Activated CD4-positive, alpha-beta memory T cell treated with anti-CD3 and anti-CD28 coated beads for 36 hours (primary cell): ENCODE measurements at regions of chr3 and their contacts with region 1.

Region 1: GRCh38 chr3:39267631-39268548 is 11.9 kb downstream of the CX3CR1 start:
- DNase-seq: peak; percentile 86
- H3K4me3 Mint-ChIP-seq: peak overlapping the region; percentile 45
- H3K27ac Mint-ChIP-seq: peak overlapping the region; percentile 94
- H3K4me1 Mint-ChIP-seq: peaks cover 30% of the 10 kb centered on the region
- H3K27me3 Mint-ChIP-seq: no peaks in the 10 kb centered on the region

Region 2: DNA sequence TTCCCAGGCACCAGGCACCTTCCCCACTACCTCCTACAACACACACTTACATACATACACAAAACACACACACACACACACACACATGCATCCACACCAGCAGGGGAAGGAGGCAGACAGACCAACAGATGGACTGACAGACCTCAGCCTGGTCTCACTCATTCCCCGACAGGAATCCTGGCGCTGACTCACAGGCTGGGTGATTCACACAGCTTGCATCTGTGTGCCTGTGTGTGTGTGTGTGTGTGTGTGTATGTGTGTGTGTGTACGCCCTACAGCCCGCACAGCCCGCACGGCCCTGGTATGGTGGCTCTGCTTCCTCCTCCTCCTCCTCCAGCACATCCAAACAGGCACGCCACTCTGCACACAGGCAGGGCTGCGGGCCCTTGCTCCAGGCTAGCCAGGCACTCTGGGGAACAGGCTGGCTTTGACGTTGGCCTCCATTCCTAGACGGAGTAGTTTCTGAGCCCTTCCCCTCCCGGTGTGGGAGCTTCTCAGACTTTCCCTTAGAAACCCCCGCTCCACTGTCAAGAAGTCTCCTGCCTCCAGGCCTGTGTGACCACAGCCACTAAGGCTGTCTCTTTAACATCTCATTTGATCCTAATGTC is 120.8 kb before region 1 on chr3:
- CTCF ChIA-PET with region 1: interaction called, 3 read pairs
- POLR2A ChIA-PET with region 1: no interaction called
- intact Hi-C with region 1: loop called (anchors 1 kb)
- DNase-seq: peak; percentile 90
- H3K4me3 Mint-ChIP-seq: peak overlapping the region; percentile 92
- H3K27ac Mint-ChIP-seq: peak overlapping the region; percentile 97
- H3K4me1 Mint-ChIP-seq: peaks cover 70% of the 10 kb centered on the region
- H3K27me3 Mint-ChIP-seq: no peaks in the 10 kb centered on the region

Region 3: DNA sequence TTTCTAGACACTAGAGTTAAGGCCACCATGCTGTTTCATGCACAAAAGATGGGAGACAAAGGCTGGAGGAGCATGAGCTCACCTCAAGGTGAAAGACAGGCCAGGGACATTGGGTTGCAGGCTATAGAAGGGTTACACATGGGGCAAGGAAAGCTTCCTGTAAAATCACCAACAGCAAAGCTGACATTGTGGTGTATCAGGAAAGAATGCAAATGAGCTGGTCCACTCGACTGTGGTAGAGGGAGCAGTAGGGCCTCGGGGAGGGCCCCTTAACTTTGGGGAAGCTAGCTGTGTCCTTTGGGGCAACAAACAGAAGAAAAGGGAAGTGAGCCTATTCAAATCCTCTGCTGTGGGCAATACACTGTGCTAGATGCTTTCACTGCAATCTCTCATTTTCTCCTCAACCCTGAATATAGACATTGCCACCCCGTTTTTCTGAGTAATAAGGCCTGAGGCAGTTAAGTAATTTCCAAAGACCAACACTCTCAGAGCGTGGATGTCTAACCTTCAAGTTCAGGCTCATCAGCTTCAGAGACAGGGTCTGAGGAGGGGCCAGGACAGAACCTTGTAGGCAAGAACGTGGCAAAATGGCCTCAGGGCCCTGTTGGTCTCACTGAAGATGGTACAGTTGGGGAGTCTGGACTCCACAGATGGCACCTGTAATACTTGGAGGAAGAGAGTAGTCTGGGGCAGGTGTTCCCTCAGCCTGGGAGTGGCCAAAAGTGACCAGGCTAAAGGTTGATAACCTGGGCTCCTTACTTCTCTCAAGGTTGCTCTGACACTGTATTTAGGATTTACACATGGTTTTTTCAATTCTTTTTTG is 12.2 kb before region 1 on chr3:
- CTCF ChIA-PET with region 1: no interaction called
- POLR2A ChIA-PET with region 1: interaction called, 3 read pairs
- intact Hi-C with region 1: loop called (anchors 1 kb)
- DNase-seq: peak; percentile 49
- H3K4me3 Mint-ChIP-seq: no peak overlapping the region
- H3K27ac Mint-ChIP-seq: peak overlapping the region; percentile 72
- H3K4me1 Mint-ChIP-seq: peaks cover 25% of the 10 kb centered on the region
- H3K27me3 Mint-ChIP-seq: no peaks in the 10 kb centered on the region